PC-3 (cell line): ENCODE measurements at regions of chr3 and their contacts with region 1.

Region 1: DNA sequence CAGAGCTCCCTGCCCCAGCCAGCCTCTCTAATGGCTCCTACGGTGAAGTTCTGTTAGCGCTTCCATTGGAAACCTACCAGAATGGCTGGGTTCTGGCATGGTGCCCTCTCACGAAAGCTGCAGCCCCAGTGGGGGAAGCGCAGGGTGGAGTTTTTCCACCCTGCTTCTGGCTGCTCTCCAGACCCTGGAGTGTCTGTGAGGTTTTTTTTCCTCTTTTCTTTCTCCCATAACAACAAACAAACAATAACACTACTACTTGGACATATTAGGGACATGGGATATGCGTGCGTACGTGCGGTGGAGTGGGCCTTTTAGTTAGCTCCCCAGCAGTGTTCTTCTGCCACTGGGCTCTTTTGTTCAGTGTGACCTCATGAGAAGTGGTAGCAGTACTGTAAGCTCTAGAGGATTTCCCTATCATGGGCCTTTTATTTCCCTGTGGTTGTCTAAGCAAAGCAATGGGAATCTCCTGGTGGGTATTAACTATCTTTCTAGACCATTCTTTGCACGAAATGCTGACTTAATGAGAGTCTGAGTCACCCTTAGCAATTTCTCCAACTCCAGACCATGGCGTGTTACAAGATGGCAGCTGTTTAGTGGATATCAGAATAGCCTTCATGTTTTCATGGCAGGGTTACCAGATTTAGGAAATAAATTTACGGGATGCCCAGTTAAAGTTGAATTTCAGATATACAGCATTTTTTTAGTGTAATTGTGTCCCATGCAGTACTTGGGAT is 161.9 kb downstream of the FNDC3B start:
- DNase-seq: no peak
- ATAC-seq: no peak
- H3K4me3 ChIP-seq: no peak overlapping the region
- H3K27ac ChIP-seq: no peak overlapping the region
- H3K4me1 ChIP-seq: peaks cover 36% of the 10 kb centered on the region
- H3K27me3 ChIP-seq: no peaks in the 10 kb centered on the region
- CTCF ChIP-seq: no peak

Region 2: GRCh38 chr3:172153335-172153861 is 47.9 kb before region 1 on chr3:
- CTCF ChIA-PET with region 1: no interaction called
- POLR2A ChIA-PET with region 1: no interaction called
- intact Hi-C with region 1: loop called (anchors 2 kb)
- DNase-seq: peak; percentile 97
- ATAC-seq: peak; percentile 98
- H3K4me3 ChIP-seq: peak overlapping the region; percentile 36; the same call in 1 of the 2 replicates
- H3K27ac ChIP-seq: peak overlapping the region; percentile 92
- H3K4me1 ChIP-seq: peaks cover 71% of the 10 kb centered on the region
- H3K27me3 ChIP-seq: no peaks in the 10 kb centered on the region
- CTCF ChIP-seq: no peak

Region 3: GRCh38 chr3:172171396-172172075 is 29.8 kb before region 1 on chr3:
- CTCF ChIA-PET with region 1: no interaction called
- POLR2A ChIA-PET with region 1: no interaction called
- intact Hi-C with region 1: loop called (anchors 2 kb)
- DNase-seq: no peak
- ATAC-seq: no peak
- H3K4me3 ChIP-seq: no peak overlapping the region
- H3K27ac ChIP-seq: no peak overlapping the region
- H3K4me1 ChIP-seq: peaks cover 27% of the 10 kb centered on the region
- H3K27me3 ChIP-seq: no peaks in the 10 kb centered on the region
- CTCF ChIP-seq: no peak

Region 4: GRCh38 chr3:172305552-172305951 is 104.2 kb after region 1 on chr3:
- CTCF ChIA-PET with region 1: no interaction called
- POLR2A ChIA-PET with region 1: no interaction called
- intact Hi-C with region 1: loop called (anchors 10 kb)
- DNase-seq: peak; percentile 83
- ATAC-seq: peak; percentile 95
- H3K4me3 ChIP-seq: no peak overlapping the region
- H3K27ac ChIP-seq: peak overlapping the region; percentile 32
- H3K4me1 ChIP-seq: peaks cover 25% of the 10 kb centered on the region
- H3K27me3 ChIP-seq: no peaks in the 10 kb centered on the region
- CTCF ChIP-seq: no peak